Activated CD4-positive, alpha-beta memory T cell treated with anti-CD3 and anti-CD28 coated beads, Interleukin-2, amount 10 ng/mL, durations not matched to agents 7 days and 5 days (primary cell): ENCODE measurements at regions of chr19 and their contacts with region 1.

Region 1: GRCh38 chr19:14366498-14366915 is 14.7 kb upstream of the ADGRE5 start:
- DNase-seq: peak; percentile 90
- H3K4me3 Mint-ChIP-seq: peak overlapping the region; percentile 61
- H3K27ac Mint-ChIP-seq: peak overlapping the region; percentile 89
- H3K4me1 Mint-ChIP-seq: peaks cover 73% of the 10 kb centered on the region
- H3K27me3 Mint-ChIP-seq: no peaks in the 10 kb centered on the region

Region 2: GRCh38 chr19:14354445-14354844 is 12.1 kb before region 1 on chr19:
- CTCF ChIA-PET with region 1: interaction called, 22 read pairs
- POLR2A ChIA-PET with region 1: interaction called, 68 read pairs
- DNase-seq: no peak
- H3K4me3 Mint-ChIP-seq: no peak overlapping the region
- H3K27ac Mint-ChIP-seq: no peak overlapping the region
- H3K4me1 Mint-ChIP-seq: peaks cover 38% of the 10 kb centered on the region
- H3K27me3 Mint-ChIP-seq: no peaks in the 10 kb centered on the region

Region 3: GRCh38 chr19:14405758-14406644 is 39.5 kb after region 1 on chr19:
- CTCF ChIA-PET with region 1: interaction called, 37 read pairs
- POLR2A ChIA-PET with region 1: interaction called, 180 read pairs
- DNase-seq: peak; percentile 92
- H3K4me3 Mint-ChIP-seq: no peak overlapping the region
- H3K27ac Mint-ChIP-seq: peak overlapping the region; percentile 68
- H3K4me1 Mint-ChIP-seq: peaks cover 45% of the 10 kb centered on the region
- H3K27me3 Mint-ChIP-seq: no peaks in the 10 kb centered on the region